HEK293 (cell line): ENCODE measurements at regions of chr1 and their contacts with region 1.

Region 1: DNA sequence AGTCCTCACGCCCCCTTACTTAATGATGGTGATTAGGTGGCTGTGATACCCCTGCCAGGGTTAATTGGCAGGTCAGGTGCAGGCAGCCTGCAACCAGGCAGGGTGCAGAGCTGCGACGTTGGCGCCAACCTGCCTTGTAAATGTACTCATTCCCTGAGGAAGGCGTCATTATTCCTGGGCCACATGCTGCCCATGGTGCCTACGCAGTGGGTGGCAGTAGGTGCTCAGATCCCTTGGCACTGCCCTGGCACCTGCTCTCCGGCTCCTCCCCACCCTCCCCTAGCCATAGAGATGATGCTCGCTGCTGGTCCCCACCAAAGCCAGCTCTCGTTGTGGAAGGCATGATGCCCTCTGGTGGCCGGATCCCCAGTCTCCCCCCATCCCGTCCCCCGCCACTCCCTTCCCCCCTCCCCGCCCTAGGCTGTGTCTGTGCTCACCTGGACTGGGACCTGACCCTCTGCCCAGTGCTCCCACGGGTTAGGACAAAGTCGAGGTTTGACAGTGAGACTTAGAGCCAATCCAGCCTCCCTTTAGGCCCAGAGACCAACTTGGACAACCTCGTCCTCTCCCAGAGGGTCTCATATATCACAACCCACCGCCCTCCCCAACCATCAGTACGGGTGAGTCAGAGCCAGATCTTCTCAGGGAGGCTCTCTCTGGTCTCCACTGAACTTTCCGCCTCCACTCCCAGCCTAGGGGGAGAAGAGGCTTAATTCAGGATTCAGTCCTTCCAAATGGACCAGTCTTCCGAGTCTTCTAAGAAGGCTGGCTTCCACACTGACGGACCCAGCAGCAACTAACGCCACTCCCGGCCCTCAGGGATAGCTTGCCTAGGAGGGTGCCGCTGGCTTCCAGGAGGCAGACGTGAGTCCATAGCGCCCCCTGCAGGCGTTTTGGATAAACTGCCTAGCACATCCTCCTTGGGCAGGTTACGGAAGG is 5.7 kb downstream of the KRTCAP2 start:
- H3K4me3 ChIP-seq: peak overlapping the region; percentile 35
- H3K27ac ChIP-seq: no peak overlapping the region; the same call in 1 of the 2 replicates
- H3K4me1 ChIP-seq: no peaks in the 10 kb centered on the region; the same call in 1 of the 2 replicates
- CTCF ChIP-seq: peak; percentile 92

Region 2: DNA sequence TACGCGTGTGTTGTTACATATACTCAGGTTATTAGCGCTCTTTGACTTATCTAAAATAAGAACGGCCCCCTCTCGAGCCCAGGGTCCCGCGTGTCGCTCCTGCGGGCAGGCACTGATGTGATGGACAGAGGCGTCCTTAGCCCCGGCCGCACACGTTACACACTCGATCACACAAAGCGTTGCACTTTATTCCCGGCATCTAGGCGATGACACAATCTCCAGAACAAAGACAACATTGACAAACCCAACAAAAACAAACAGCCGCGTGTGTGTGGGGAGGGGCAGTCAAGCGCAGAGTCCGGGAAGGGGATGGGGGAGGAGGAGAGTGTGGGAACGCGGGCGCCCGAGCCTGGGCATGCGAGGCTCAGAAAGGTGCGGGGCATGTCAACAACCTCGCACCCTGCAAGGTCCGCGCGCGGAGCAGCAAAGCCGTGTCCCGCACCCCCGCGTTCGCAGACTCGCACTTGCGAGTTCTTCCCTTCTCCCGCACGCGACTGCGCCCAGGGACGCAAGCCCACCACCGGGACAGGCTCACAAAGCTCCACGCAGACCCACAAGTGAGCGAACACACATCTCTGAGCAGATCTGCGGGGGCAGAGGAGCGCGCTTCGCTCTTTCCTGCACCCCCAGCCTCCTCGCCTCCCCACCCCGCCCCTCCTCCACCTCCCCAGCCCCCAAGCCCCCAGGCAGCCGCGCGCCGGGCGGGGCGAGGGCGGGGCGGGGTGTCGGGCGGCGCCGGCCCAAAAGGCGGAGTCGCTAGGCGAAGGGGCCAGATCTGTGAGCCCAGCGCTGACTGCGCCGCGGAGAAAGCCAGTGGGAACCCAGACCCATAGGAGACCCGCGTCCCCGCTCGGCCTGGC is 40.1 kb before region 1 on chr1 and contains the start of gene EFNA1:
- CTCF ChIA-PET with region 1: interaction called, 17 read pairs
- POLR2A ChIA-PET with region 1: interaction called, 17 read pairs
- H3K4me3 ChIP-seq: peak within 1 kb of the TSS; percentile 62
- H3K27ac ChIP-seq: peak within 1 kb of the TSS; percentile 75
- H3K4me1 ChIP-seq: peaks cover 21% of the 10 kb centered on the region
- CTCF ChIP-seq: no peak; the same call in 1 of the 2 replicates

Region 3: GRCh38 chr1:155145491-155145890 is 21.9 kb before region 1 on chr1:
- CTCF ChIA-PET with region 1: interaction called, 13 read pairs
- POLR2A ChIA-PET with region 1: interaction called, 11 read pairs
- H3K4me3 ChIP-seq: no peak overlapping the region
- H3K27ac ChIP-seq: no peak overlapping the region
- H3K4me1 ChIP-seq: no peaks in the 10 kb centered on the region
- CTCF ChIP-seq: no peak

Region 4: GRCh38 chr1:155308493-155309422 is 141.3 kb after region 1 on chr1 and contains the start of gene FDPS:
- CTCF ChIA-PET with region 1: no interaction called
- POLR2A ChIA-PET with region 1: no interaction called
- H3K4me3 ChIP-seq: peak within 1 kb of the TSS; percentile 67
- H3K27ac ChIP-seq: peak within 1 kb of the TSS; percentile 88
- H3K4me1 ChIP-seq: peaks cover 5% of the 10 kb centered on the region; the same call in 1 of the 2 replicates
- CTCF ChIP-seq: no peak